Caco-2 (cell line): ENCODE measurements at regions of chr12 and their contacts with region 1.

Region 1: DNA sequence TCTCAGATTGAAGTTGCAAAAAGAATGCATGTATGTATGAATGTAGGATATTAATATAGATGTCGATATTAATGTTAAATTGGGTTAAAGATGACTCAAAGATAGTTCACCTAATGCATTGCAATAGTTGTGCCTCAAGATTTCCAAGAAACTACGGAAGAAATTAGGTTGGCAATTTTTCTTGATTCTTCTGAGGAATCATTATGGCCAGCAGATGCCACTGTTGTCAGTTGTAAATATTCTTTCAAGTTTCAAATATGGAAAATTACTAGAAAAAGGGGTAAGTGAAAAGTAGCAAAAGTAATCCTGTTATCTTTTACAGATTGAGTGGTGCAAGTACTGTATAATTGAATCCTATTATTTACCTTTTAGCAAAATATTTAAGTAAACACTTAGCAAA is 202.1 kb downstream of the ADAMTS20 start:
- DNase-seq: no peak
- H3K4me3 ChIP-seq: no peak overlapping the region
- H3K4me3 Mint-ChIP-seq: no peak overlapping the region
- H3K27ac Mint-ChIP-seq: no peak overlapping the region
- H3K4me1 ChIP-seq: no peaks in the 10 kb centered on the region
- H3K4me1 Mint-ChIP-seq: no peaks in the 10 kb centered on the region
- H3K27me3 ChIP-seq: no peaks in the 10 kb centered on the region
- H3K27me3 Mint-ChIP-seq: peaks cover 5% of the 10 kb centered on the region
- CTCF ChIP-seq: peak; percentile 25 to 62

Region 2: GRCh38 chr12:43766291-43766690 is 416.4 kb after region 1 on chr12:
- CTCF ChIA-PET with region 1: no interaction called
- POLR2A ChIA-PET with region 1: interaction called, 15 read pairs
- intact Hi-C with region 1: no loop called
- DNase-seq: no peak
- H3K4me3 ChIP-seq: no peak overlapping the region
- H3K4me3 Mint-ChIP-seq: no peak overlapping the region
- H3K27ac Mint-ChIP-seq: no peak overlapping the region
- H3K4me1 ChIP-seq: no peaks in the 10 kb centered on the region
- H3K4me1 Mint-ChIP-seq: no peaks in the 10 kb centered on the region
- H3K27me3 ChIP-seq: no peaks in the 10 kb centered on the region
- H3K27me3 Mint-ChIP-seq: no peaks in the 10 kb centered on the region
- CTCF ChIP-seq: no peak